ENCODE measurements at regions of chr10 and their contacts with region 1.

Region 1: DNA sequence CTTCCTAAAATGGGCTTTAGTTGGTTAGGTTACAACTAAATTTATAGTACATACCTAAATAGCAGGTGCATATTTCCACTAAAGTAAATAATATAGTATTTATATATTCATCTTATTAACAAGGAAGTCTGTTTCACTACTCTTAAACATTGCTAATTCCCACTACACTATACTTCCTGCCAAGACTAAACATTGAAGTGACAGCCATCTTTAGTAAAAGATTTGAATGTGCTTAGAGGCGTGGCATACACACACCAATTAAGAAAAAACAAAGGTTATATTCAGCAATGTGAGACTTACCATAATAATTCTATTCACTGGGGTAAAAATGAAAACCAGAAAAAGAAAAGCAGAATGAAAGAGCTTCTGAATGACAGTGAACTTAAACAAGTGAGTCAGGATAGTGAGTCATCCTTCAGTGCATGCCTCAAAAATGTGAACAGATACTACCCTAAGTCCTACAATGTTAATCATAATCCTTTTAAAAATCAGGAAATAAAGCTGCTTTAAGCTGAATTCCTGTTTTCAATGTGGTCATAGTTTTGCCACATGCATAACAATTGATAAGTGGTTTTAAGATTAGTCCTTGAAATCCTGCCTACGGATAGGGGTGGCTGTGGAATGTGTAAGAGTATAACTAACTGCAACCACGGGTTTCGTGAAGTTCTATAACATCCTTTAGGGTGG is 59.4 kb downstream of the USP6NL start:
- DNase-seq: no peak
- H3K4me3 Mint-ChIP-seq: no peak overlapping the region
- H3K27ac Mint-ChIP-seq: peak overlapping the region; percentile 68
- H3K4me1 Mint-ChIP-seq: peaks cover 39% of the 10 kb centered on the region
- H3K27me3 Mint-ChIP-seq: no peaks in the 10 kb centered on the region

Region 2: GRCh38 chr10:10589540-10590303 is 962.3 kb before region 1 on chr10:
- CTCF ChIA-PET with region 1: no interaction called
- intact Hi-C with region 1: no loop called
- DNase-seq: peak; percentile 57
- H3K4me3 Mint-ChIP-seq: no peak overlapping the region
- H3K27ac Mint-ChIP-seq: no peak overlapping the region
- H3K4me1 Mint-ChIP-seq: peaks cover 6% of the 10 kb centered on the region
- H3K27me3 Mint-ChIP-seq: peaks cover 17% of the 10 kb centered on the region

Region 3: DNA sequence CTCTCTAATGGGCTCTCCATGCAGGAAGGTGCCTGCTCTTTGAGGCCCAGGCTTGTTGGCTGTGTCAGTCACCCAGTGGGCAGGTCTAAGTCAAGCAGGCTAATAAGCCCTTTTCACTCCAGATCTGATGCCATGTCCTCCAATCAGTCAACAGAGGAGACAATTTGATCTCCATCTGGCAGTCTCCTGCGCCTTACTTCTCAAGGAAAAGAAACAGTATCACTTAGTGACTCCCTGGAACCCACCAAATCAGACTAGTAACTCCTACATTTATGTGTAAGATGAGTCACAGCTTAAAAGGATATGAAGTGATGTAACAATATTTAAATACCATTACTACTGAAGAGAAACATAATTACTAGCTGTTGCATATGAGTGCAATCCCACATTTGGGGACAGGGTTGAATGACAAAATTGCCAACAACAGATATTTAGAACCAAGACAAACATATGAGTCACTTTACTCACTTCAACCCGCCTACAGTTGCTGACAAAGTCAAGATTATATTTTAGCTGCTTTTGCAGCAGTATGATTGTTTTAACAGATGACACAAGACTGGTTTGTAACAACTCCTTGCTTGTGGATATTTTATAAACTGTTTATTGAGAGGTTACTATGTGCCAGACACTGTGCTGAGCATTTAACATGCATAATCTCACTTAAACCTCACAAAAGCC is 12.7 kb before region 1 on chr10:
- CTCF ChIA-PET with region 1: interaction called, 3 read pairs
- intact Hi-C with region 1: loop called (anchors 1 kb)
- DNase-seq: peak; percentile 25
- H3K4me3 Mint-ChIP-seq: no peak overlapping the region
- H3K27ac Mint-ChIP-seq: no peak overlapping the region
- H3K4me1 Mint-ChIP-seq: peaks cover 19% of the 10 kb centered on the region
- H3K27me3 Mint-ChIP-seq: no peaks in the 10 kb centered on the region

Region 4: GRCh38 chr10:11611248-11612020 is 59.4 kb after region 1 on chr10 and contains the start of gene USP6NL:
- CTCF ChIA-PET with region 1: no interaction called
- intact Hi-C with region 1: loop called (anchors 1 kb)
- DNase-seq: peak; percentile 70
- H3K4me3 Mint-ChIP-seq: peak within 1 kb of the TSS; percentile 84
- H3K27ac Mint-ChIP-seq: peak within 1 kb of the TSS; percentile 73
- H3K4me1 Mint-ChIP-seq: peaks cover 40% of the 10 kb centered on the region
- H3K27me3 Mint-ChIP-seq: no peaks in the 10 kb centered on the region
- total RNA-seq, gene USP6NL: 6.9 to 7.5 TPM

Region 5: GRCh38 chr10:11631890-11632587 is 80.0 kb after region 1 on chr10:
- CTCF ChIA-PET with region 1: no interaction called
- intact Hi-C with region 1: loop called (anchors 1 kb)
- DNase-seq: peak; percentile 76
- H3K4me3 Mint-ChIP-seq: no peak overlapping the region
- H3K27ac Mint-ChIP-seq: no peak overlapping the region
- H3K4me1 Mint-ChIP-seq: peaks cover 13% of the 10 kb centered on the region
- H3K27me3 Mint-ChIP-seq: no peaks in the 10 kb centered on the region

Region 6: GRCh38 chr10:11684717-11685645 is 132.9 kb after region 1 on chr10:
- CTCF ChIA-PET with region 1: no interaction called
- intact Hi-C with region 1: loop called (anchors 1 kb)
- DNase-seq: peak; percentile 86
- H3K4me3 Mint-ChIP-seq: peak overlapping the region; percentile 75
- H3K27ac Mint-ChIP-seq: peak overlapping the region; percentile 95
- H3K4me1 Mint-ChIP-seq: peaks cover 36% of the 10 kb centered on the region
- H3K27me3 Mint-ChIP-seq: peaks cover 1% of the 10 kb centered on the region

Region 7: GRCh38 chr10:11713186-11713743 is 161.2 kb after region 1 on chr10:
- CTCF ChIA-PET with region 1: no interaction called
- intact Hi-C with region 1: loop called (anchors 1 kb)
- DNase-seq: no peak
- H3K4me3 Mint-ChIP-seq: no peak overlapping the region
- H3K27ac Mint-ChIP-seq: no peak overlapping the region
- H3K4me1 Mint-ChIP-seq: peaks cover 17% of the 10 kb centered on the region
- H3K27me3 Mint-ChIP-seq: peaks cover 32% of the 10 kb centered on the region

Region 8: GRCh38 chr10:11782793-11783557 is 230.9 kb after region 1 on chr10:
- CTCF ChIA-PET with region 1: no interaction called
- intact Hi-C with region 1: no loop called
- DNase-seq: peak; percentile 9
- H3K4me3 Mint-ChIP-seq: no peak overlapping the region
- H3K27ac Mint-ChIP-seq: no peak overlapping the region
- H3K4me1 Mint-ChIP-seq: peaks cover 8% of the 10 kb centered on the region
- H3K27me3 Mint-ChIP-seq: no peaks in the 10 kb centered on the region

Measured in activated naive CD4-positive, alpha-beta T cell treated with anti-CD3 and anti-CD28 coated beads for 36 hours (primary cell).